ENCODE measurements at regions of chr14 and their contacts with region 1.

Region 1: GRCh38 chr14:75088574-75089373 is 19.3 kb downstream of the ZC2HC1C start:
- DNase-seq: no peak
- H3K4me3 ChIP-seq: no peak overlapping the region
- CTCF ChIP-seq: peak; percentile 60

Region 2: DNA sequence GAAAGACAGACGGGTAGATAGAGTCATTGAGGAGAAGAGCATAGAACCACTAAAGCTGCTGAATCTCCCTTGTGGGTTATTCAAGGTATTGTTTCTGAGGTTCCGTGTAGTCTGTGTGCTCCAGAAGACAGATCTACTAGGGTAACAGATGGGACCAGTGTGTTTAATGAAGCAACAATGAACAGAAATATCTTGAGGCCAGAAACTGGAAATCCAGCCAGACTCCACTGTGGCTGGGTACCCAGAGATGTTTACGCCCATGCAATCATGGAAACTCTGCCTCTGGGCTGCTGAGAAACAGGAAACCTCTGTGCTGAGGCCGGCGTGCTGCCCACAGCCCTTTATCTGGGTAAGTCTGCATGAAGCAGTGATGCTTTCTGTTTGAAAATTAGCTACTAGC is 221.1 kb before region 1 on chr14:
- CTCF ChIA-PET with region 1: interaction called, 83 read pairs
- POLR2A ChIA-PET with region 1: no interaction called
- DNase-seq: no peak
- H3K4me3 ChIP-seq: no peak overlapping the region
- CTCF ChIP-seq: no peak

Region 3: DNA sequence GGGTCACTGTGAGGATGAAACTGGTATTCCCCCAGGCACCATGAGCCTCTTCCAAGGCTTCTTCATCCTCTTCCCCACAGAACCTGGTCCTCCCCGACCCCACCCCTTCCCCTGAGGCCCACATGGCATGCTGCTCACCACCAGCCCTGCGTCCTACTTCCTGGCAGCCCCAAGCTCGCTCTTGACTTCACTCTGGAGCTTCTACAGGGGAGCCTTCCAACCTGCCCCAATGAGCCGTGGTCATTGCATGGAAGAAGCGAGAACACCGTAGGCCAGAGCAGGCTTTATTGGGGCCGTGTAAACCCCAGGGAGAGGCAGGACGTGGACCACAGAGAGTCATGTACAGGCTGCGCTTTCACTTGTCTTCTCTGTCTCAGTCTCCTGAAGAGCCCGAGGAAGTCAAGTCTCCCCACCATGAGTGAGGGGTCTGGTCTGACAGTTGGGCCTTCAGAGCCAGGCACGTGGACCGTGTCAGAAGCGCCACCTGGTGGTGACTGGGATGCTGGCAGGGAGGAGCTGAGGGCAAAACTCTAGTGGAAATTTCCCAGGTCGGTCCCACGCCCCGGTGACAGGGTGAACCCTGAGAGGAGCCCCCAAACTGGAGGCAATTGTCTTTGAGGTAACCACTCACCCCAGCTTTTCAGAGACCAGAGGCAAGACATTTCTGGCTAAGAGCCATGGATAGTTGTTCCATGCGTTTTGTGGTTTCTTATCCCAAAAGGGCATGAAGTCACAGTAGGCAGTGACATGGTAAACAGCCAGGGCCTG is 183.2 kb before region 1 on chr14:
- CTCF ChIA-PET with region 1: interaction called, 296 read pairs
- POLR2A ChIA-PET with region 1: no interaction called
- DNase-seq: no peak
- H3K4me3 ChIP-seq: no peak overlapping the region
- CTCF ChIP-seq: peak; percentile 94

Region 4: DNA sequence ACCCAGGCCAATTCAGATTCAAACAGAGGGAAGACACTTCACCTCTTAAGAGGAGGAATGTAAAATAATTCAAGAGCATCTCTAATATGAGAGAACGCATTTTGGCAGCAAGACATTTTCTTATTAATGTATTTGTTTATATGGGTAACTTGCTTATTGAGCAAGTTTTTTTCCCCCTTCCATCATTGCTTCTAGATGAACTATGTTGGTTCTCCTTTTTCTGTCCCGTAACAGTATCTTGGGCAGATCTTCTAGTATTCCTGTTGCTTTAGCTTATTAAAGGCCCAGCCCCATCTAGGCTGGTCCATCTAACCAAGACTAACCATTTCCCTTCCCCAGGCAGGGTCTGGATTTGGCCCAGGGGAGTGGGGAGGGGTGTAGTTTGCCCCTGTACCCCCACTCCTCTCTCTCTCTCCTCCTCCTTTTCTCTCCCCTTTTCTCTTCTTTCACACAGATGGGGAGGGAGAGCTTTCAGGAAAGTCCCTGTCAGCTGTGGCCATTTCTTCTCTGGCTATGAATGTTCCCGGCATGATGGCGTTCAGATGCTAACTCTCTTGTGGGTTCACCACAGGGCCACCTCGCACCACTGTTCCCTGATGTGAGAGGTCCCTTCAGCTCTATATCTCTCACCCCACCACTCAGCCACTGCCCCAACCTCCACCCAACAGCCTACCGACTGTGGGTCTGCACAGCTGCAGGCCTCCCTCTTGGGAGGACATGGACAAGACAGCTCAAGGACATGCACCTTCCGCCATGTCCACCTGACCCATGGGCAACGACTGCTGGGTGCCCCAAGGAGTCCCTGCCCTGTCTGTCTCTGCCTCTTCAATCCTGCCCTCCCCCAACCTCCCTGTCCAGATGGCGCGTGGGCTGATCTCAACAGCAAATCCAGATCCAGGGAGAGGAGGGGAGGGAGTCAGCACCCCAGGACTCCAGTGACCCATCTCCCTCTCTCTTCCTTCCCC is 150.0 kb before region 1 on chr14:
- CTCF ChIA-PET with region 1: interaction called, 182 read pairs
- POLR2A ChIA-PET with region 1: no interaction called
- DNase-seq: no peak
- H3K4me3 ChIP-seq: no peak overlapping the region
- CTCF ChIP-seq: no peak

Region 5: GRCh38 chr14:75069045-75069810 is 19.5 kb before region 1 on chr14 and contains the start of gene ZC2HC1C:
- CTCF ChIA-PET with region 1: interaction called, 52 read pairs
- POLR2A ChIA-PET with region 1: no interaction called
- DNase-seq: no peak
- H3K4me3 ChIP-seq: peak within 1 kb of the TSS; percentile 67
- CTCF ChIP-seq: no peak

Region 6: DNA sequence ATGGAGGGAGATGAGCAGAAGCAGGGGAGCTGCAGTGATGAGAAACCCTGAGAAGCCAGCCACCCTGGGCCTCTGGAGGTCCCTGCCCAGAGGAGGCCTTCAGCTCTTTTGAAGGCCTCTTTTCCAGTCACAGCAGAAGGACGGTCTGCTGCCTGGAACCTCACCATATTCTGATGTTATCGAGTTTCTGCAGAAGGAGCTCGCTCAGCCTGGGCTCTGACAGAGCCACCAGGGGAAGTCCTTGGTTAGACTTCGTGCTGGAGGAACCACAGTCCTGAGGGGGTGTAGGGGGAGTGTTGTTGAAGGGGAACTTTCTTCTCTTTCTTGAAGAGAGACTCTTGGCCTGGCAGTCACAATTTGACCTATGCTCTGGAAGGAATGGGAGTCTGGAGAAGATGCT is 408.4 kb after region 1 on chr14:
- CTCF ChIA-PET with region 1: no interaction called
- POLR2A ChIA-PET with region 1: no interaction called
- DNase-seq: no peak
- H3K4me3 ChIP-seq: no peak overlapping the region
- CTCF ChIP-seq: no peak

Region 7: GRCh38 chr14:75831458-75831857 is 742.7 kb after region 1 on chr14:
- CTCF ChIA-PET with region 1: no interaction called
- POLR2A ChIA-PET with region 1: no interaction called
- DNase-seq: no peak
- H3K4me3 ChIP-seq: no peak overlapping the region
- CTCF ChIP-seq: no peak

Measured in AG04449 (cell line).